GM12878 (cell line): ENCODE measurements at regions of chr5 and their contacts with region 1.

Region 1: GRCh38 chr5:140372971-140373487 is 13.0 kb downstream of the SLC4A9 start:
- DNase-seq: no peak
- ATAC-seq: peak; percentile 86
- H3K4me3 ChIP-seq: no peak overlapping the region
- H3K27ac ChIP-seq: no peak overlapping the region
- H3K4me1 ChIP-seq: no peaks in the 10 kb centered on the region
- H3K27me3 ChIP-seq: no peaks in the 10 kb centered on the region
- CTCF ChIP-seq: peak; percentile 81 to 88 (median 83)
- EP300 ChIP-seq: no peak
- POLR2A ChIP-seq: no peak
- RAD21 ChIP-seq: peak; percentile 85

Region 2: DNA sequence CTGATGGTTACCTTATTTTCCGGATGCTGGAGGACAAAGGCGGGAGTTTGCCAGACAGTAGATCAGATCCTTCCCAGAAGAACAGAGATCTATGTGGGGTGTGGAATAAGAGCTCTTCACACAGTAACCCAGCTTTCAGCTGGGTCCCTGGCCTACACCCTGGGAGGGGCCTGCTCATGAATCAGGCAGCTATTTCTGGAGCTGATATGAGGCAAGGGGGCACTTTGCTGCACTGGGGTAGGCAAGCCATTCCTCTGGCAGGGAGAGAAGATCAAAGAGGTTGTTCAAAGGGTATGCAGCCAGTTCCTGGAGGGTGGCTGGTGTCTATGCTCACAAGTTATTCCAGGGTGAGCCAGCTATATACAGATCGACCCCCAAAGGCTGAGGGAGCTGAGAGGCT is 149.5 kb before region 1 on chr5:
- CTCF ChIA-PET with region 1: no interaction called
- POLR2A ChIA-PET with region 1: no interaction called
- RAD21 ChIA-PET with region 1: no interaction called
- SMC1A ChIA-PET with region 1: no interaction called
- in situ Hi-C with region 1: no loop called
- intact Hi-C with region 1: no loop called
- DNase-seq: no peak
- ATAC-seq: no peak
- H3K4me3 ChIP-seq: no peak overlapping the region
- H3K27ac ChIP-seq: no peak overlapping the region
- H3K4me1 ChIP-seq: peaks cover 30% of the 10 kb centered on the region
- H3K27me3 ChIP-seq: no peaks in the 10 kb centered on the region
- CTCF ChIP-seq: no peak
- EP300 ChIP-seq: no peak
- POLR2A ChIP-seq: no peak
- RAD21 ChIP-seq: no peak

Region 3: DNA sequence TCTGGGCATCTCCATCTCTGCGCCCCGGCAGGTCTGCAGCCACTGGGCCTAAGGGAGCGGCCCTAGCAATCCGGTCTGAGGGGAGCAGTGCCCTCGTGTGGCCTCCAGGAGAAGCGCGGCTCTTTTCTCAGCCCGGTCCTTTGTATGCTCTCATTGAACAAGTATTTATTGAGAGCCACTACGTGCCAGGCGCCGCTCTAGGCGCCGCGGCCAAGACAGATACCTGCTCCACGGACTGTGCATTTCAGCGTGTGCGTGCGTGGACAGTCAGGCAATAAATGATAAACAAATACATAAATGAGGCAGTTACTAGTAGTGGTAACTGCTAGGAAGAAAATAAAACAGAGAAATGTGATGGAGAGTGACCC is 15.3 kb before region 1 on chr5:
- CTCF ChIA-PET with region 1: interaction called, 25 read pairs
- POLR2A ChIA-PET with region 1: no interaction called
- RAD21 ChIA-PET with region 1: no interaction called
- SMC1A ChIA-PET with region 1: interaction called, 4 read pairs
- in situ Hi-C with region 1: no loop called
- intact Hi-C with region 1: no loop called
- DNase-seq: no peak
- ATAC-seq: peak; percentile 98
- H3K4me3 ChIP-seq: no peak overlapping the region
- H3K27ac ChIP-seq: no peak overlapping the region
- H3K4me1 ChIP-seq: peaks cover 11% of the 10 kb centered on the region
- H3K27me3 ChIP-seq: no peaks in the 10 kb centered on the region
- CTCF ChIP-seq: peak; percentile 92 to 97 (median 96)
- EP300 ChIP-seq: no peak
- POLR2A ChIP-seq: no peak
- RAD21 ChIP-seq: peak; percentile 85

Region 4: DNA sequence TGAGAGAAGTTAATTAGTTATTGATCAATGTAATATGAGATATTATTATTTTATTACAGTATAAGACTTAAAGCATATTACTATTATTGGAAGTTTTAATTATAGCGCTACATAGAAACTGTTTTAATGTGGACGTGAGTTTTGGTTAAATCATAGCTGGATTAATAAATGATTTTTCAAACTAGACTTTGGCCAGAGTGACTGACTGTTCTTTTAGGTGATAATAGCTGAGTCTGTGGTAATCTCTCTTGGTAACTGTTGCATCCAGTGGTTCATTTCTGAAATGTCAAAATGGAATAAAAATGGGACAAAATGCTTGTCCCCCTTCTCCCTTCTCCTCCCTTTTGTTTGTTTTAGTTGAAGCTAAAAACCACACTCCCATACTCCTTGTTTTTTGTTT is 56.7 kb after region 1 on chr5:
- CTCF ChIA-PET with region 1: interaction called, 3 read pairs
- POLR2A ChIA-PET with region 1: no interaction called
- RAD21 ChIA-PET with region 1: no interaction called
- SMC1A ChIA-PET with region 1: no interaction called
- in situ Hi-C with region 1: no loop called
- intact Hi-C with region 1: loop called (anchors 2 kb)
- DNase-seq: no peak
- ATAC-seq: no peak
- H3K4me3 ChIP-seq: no peak overlapping the region
- H3K27ac ChIP-seq: no peak overlapping the region
- H3K4me1 ChIP-seq: no peaks in the 10 kb centered on the region
- H3K27me3 ChIP-seq: no peaks in the 10 kb centered on the region
- CTCF ChIP-seq: no peak
- EP300 ChIP-seq: no peak
- POLR2A ChIP-seq: no peak
- RAD21 ChIP-seq: no peak

Region 5: DNA sequence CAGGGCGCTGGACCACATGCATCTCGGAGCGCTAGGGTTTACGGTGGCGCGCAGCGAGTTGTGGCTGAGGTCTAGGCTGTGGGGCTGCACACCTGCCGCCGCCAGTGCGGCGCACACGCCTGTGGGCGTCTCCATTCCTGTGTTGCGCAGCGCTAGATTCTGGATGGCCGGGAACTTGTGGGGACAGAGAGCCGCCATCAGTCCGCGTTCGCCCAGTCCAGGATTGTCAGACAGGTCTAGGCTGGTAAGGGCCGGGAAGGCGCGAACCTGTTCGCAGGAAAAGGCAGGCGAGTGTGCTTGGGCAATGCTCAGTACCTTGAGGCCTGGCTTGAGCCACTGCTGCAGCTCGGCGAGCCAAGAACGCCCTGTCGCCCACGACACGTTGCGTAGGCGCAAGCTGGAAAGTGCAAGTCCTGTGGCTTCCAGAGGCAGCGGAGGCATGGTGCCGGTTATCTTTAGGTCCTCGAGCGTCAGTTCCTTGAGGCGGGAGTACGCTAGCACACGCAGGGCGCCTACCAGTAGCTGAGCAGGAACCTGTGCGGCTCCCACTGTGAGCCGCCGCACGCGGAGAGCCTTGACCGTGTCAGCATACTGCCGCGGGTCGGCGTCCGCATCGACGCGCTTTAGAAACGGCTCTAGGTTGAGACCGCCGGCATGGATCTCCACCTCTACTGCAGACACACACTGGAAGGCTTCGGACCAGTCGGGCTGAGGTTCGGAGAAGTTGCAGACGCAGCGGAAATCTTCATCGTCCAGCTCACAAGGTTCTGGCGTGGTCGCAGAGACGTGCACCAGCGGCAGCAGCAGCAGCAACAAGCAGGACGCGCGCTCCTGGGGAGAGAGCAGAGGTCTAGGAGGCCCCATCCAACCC is 259.4 kb after region 1 on chr5:
- CTCF ChIA-PET with region 1: interaction called, 44 read pairs
- POLR2A ChIA-PET with region 1: no interaction called
- RAD21 ChIA-PET with region 1: interaction called, 12 read pairs
- SMC1A ChIA-PET with region 1: interaction called, 13 read pairs
- in situ Hi-C with region 1: no loop called
- intact Hi-C with region 1: loop called (anchors 2 kb)
- DNase-seq: no peak
- ATAC-seq: peak; percentile 71
- H3K4me3 ChIP-seq: peak overlapping the region; percentile 58
- H3K27ac ChIP-seq: no peak overlapping the region
- H3K4me1 ChIP-seq: peaks cover 13% of the 10 kb centered on the region
- H3K27me3 ChIP-seq: peaks cover 3 to 4% of the 10 kb centered on the region in 2 experiments; a peak in 2 of 4 replicates
- CTCF ChIP-seq: no peak
- EP300 ChIP-seq: no peak
- POLR2A ChIP-seq: no peak; the same call in 1 of the 2 replicates
- RAD21 ChIP-seq: no peak

Region 6: DNA sequence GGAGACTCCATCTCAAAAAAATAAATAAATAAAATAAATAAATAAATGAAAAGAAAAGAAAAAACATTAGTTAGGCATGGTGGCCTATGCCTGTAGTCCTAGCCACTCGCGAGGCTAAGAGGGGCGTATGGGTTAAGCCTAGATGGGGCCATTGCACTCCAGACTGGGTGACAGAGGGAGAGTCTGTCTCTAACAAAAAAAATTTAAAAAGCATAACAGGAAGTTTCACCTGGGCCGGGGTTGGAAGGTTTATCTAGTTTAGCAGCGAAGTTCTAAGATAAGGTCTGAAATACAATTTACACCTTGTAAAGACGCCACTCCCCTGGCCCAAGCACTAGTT is 345.2 kb after region 1 on chr5:
- CTCF ChIA-PET with region 1: interaction called, 52 read pairs
- POLR2A ChIA-PET with region 1: no interaction called
- RAD21 ChIA-PET with region 1: interaction called, 21 read pairs
- SMC1A ChIA-PET with region 1: interaction called, 21 read pairs
- in situ Hi-C with region 1: no loop called
- intact Hi-C with region 1: loop called (anchors 1 kb)
- DNase-seq: no peak
- ATAC-seq: peak; percentile 11; the same call in 2 of the 3 replicates
- H3K4me3 ChIP-seq: no peak overlapping the region
- H3K27ac ChIP-seq: no peak overlapping the region
- H3K4me1 ChIP-seq: no peaks in the 10 kb centered on the region
- H3K27me3 ChIP-seq: no peaks in the 10 kb centered on the region
- CTCF ChIP-seq: no peak
- EP300 ChIP-seq: no peak
- POLR2A ChIP-seq: no peak
- RAD21 ChIP-seq: no peak